A549 (cell line): ENCODE measurements at regions of chr17 and their contacts with region 1.

Region 1: GRCh38 chr17:50161023-50161910 is 4.5 kb upstream of the SGCA start:
- DNase-seq: peak; percentile 92 to 100
- ATAC-seq: peak; percentile 88 to 96
- H3K4me3 ChIP-seq: peak overlapping the region; percentile 74
- H3K27ac ChIP-seq: peak overlapping the region; percentile 80 to 86
- H3K4me1 ChIP-seq: peaks cover 9% of the 10 kb centered on the region; the same call in 2 of the 3 replicates
- CTCF ChIP-seq: peak; percentile 98
- EP300 ChIP-seq: no peak
- POLR2A ChIP-seq: peak; percentile 92
- RAD21 ChIP-seq: peak; percentile 72 to 80

Region 2: GRCh38 chr17:49887086-49888028 is 273.9 kb before region 1 on chr17:
- CTCF ChIA-PET with region 1: no interaction called
- POLR2A ChIA-PET with region 1: no interaction called
- DNase-seq: no peak
- ATAC-seq: no peak
- H3K4me3 ChIP-seq: no peak overlapping the region
- H3K27ac ChIP-seq: no peak overlapping the region
- H3K4me1 ChIP-seq: no peaks in the 10 kb centered on the region
- CTCF ChIP-seq: no peak
- EP300 ChIP-seq: no peak
- POLR2A ChIP-seq: no peak
- RAD21 ChIP-seq: no peak

Region 3: DNA sequence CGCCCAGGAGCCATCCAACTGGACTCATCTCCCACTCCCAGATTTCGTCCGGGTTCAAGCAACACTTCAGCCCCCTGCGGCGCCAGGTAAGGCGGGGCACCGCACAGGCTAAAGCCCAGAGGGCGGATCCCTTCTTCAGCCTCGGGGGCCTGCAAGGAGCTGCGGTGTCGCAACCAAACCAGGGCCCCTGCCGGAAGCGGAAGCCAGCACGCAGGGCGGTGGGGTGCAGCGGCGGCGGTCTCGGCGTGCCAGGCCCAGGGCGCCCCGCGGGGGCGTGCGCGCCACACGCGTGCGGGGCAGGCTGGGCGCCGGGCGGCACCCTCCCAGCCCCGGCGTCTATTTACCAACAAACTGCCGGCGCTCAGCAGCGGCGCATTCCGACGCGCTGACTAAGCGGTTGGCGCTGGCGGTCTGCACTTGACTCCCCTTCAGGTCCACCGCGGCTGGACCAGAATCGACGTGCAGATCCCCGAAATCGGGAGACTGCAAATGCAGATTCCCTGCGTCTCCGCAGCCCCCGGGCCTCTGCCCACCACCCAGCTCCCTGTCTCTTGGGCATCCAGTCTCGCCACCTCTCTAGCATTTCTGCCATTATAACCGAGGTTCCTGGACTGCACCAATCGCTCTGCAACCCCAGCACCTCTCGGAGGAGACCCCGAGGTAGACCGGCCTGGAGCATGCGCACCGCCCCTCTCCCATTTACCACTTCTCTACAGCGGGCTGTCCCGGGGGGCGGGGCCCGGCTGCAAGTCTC is 192.7 kb before region 1 on chr17:
- CTCF ChIA-PET with region 1: no interaction called
- POLR2A ChIA-PET with region 1: no interaction called
- DNase-seq: peak; percentile 86 to 95
- ATAC-seq: peak; percentile 83 to 92
- H3K4me3 ChIP-seq: peak overlapping the region; percentile 69
- H3K27ac ChIP-seq: peak overlapping the region; percentile 82 to 92
- H3K4me1 ChIP-seq: peaks cover 12% of the 10 kb centered on the region; the same call in 2 of the 3 replicates
- CTCF ChIP-seq: no peak
- EP300 ChIP-seq: no peak
- POLR2A ChIP-seq: peak; percentile 70
- RAD21 ChIP-seq: 0 out of 5 replicates have a peak, but pooled peaks of 1 of the 2 experiments have one; percentile 20

Region 4: DNA sequence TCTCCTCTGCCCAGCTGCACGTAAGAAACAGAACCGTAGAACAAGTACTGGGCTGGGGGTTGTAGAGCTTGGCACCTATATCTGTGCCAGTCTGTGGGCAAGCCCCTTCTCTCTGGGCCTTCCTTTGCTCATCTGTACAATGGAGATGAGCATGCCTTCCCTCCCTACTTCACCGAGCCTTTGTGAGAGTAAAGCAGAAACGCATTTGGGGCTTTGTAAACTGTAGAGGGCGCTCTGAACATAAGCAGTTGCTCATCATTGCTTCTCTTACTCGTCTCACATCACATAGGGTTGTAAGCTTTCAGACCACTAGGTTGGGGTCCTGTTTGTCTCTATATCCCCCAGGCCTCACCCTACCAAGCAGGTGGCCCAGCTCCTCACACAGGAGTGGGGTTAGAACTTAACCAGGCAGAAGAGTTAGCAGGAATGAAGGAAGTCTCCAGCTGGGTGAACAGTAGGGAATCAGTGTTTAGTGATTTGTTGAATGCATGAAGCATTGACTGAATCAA is 46.4 kb before region 1 on chr17:
- CTCF ChIA-PET with region 1: interaction called, 1,356 read pairs
- POLR2A ChIA-PET with region 1: interaction called, 3 read pairs
- DNase-seq: peak; percentile 66 to 82
- ATAC-seq: peak; percentile 17 to 69; a peak in 4 of 6 replicates
- H3K4me3 ChIP-seq: no peak overlapping the region
- H3K27ac ChIP-seq: no peak overlapping the region
- H3K4me1 ChIP-seq: peaks cover 10% of the 10 kb centered on the region; the same call in 1 of the 3 replicates
- CTCF ChIP-seq: peak; percentile 76
- EP300 ChIP-seq: no peak
- POLR2A ChIP-seq: no peak
- RAD21 ChIP-seq: peak; percentile 66 to 83

Region 5: GRCh38 chr17:50129728-50130558 is 31.3 kb before region 1 on chr17 and contains the start of gene SAMD14:
- CTCF ChIA-PET with region 1: interaction called, 424 read pairs
- POLR2A ChIA-PET with region 1: no interaction called
- DNase-seq: peak; percentile 66 to 74
- ATAC-seq: peak; percentile 44 to 46; a peak in 4 of 6 replicates
- H3K4me3 ChIP-seq: peak within 1 kb of the TSS; percentile 63
- H3K27ac ChIP-seq: peak within 1 kb of the TSS; percentile 67 to 89
- H3K4me1 ChIP-seq: peaks cover 47% of the 10 kb centered on the region
- CTCF ChIP-seq: no peak
- EP300 ChIP-seq: no peak
- POLR2A ChIP-seq: no peak
- RAD21 ChIP-seq: no peak
- polyA plus RNA-seq, gene SAMD14: 0.12 and 0.15 TPM in 2 replicates

Region 6: DNA sequence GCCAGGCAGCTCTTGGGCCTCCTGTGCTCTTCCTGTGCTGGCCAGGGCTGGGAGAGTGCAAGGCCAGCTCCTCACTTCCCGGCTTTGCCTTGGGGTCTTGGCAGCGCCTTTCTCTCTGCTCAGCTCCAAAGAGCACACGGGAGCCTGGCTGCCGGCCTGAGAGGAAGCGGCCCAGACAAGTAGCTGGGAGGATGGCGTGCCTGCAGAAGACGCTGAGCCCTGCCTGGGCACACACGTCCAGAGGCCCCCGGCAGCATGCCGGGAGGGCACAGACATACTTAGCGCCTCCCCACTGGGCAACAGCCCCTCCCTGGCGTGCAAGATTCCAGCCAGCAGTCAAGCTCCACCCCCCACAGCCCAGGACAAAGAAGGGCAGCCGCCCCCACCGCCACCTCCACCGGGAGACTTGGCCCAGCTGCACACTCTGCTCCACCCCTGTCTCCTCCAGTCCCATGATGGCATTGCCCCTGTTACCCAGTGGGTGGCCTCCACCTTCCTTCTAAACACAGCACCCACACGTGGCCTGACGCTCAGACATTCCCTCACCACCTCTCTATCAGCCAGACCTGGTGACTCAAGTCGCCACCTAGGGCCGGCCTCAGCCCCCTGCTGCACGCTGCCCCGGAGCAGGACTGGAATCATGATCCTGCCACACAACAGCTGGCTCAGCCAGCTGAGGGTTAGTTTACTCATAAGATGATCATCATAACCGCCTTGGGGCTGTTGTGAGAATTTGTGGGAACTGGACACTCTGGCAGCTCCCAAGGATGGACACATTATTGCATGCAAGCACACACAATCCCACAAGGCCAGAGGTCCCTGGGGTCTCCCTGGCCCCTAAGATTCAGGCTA is 16.9 kb after region 1 on chr17:
- CTCF ChIA-PET with region 1: interaction called, 424 read pairs
- POLR2A ChIA-PET with region 1: interaction called, 5 read pairs
- DNase-seq: peak; percentile 98
- ATAC-seq: peak; percentile 86 to 93
- H3K4me3 ChIP-seq: no peak overlapping the region
- H3K27ac ChIP-seq: peak overlapping the region; percentile 90 to 95
- H3K4me1 ChIP-seq: peaks cover 61% of the 10 kb centered on the region
- CTCF ChIP-seq: peak; percentile 86
- EP300 ChIP-seq: peak; percentile 67 to 71; a peak in 3 of 5 replicates
- POLR2A ChIP-seq: peak; percentile 73
- RAD21 ChIP-seq: peak; percentile 62 to 69